ENCODE measurements at regions of chr1 and their contacts with region 1.

Region 1: DNA sequence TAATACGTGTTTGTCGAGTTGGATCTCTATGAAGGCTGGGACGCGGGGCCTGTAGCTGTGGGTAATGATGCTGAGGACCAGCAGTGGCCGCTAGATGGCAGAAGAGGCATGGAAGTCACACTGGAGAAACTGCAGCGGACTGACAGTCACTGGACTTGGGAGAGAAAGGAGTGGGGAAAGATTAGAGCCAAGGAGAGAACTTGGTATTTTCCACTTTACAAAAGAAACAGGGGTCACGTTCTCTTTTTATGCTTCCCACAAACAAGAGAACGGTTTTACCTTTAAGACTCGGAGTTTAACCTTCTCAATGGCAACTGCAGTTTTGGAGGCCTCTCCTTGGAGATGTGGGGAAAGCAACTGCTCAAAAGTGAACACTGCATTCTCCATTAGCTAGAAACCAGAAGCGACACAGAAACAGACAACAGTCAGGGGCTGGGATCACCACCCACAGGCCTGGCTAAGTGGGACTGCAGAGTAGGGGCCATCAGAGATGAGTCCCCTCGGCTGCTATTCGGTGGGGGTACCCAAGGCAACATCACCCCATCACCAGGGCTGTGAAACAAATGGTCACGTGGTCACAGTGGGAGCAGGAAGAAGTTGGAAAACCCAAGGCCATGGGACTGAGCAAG is 51.1 kb upstream of the EDEM3 start:
- DNase-seq: peak; percentile 78 to 88 (median 81)
- H3K4me3 ChIP-seq: peak overlapping the region in 1 of 3 experiments; percentile 5
- H3K4me3 Mint-ChIP-seq: no peak overlapping the region
- H3K27ac ChIP-seq: peak overlapping the region; percentile 11 to 19
- H3K27ac Mint-ChIP-seq: peak overlapping the region; percentile 71 to 88 (median 80)
- H3K4me1 ChIP-seq: peaks cover 19% of the 10 kb centered on the region in 2 donors
- H3K4me1 Mint-ChIP-seq: peaks cover 19% of the 10 kb centered on the region
- H3K27me3 ChIP-seq: no peaks in the 10 kb centered on the region
- H3K27me3 Mint-ChIP-seq: no peaks in the 10 kb centered on the region
- CTCF ChIP-seq: peak; percentile 93

Region 2: GRCh38 chr1:184982002-184982954 is 176.5 kb after region 1 on chr1:
- intact Hi-C with region 1: loop called (anchors 1 to 2 kb)
- DNase-seq: peak; percentile 73 to 85 (median 81)
- H3K4me3 ChIP-seq: no peak overlapping the region
- H3K4me3 Mint-ChIP-seq: no peak overlapping the region
- H3K27ac ChIP-seq: no peak overlapping the region
- H3K27ac Mint-ChIP-seq: no peak overlapping the region
- H3K4me1 ChIP-seq: peaks cover 4% of the 10 kb centered on the region in 2 donors
- H3K4me1 Mint-ChIP-seq: peaks cover 4% of the 10 kb centered on the region
- H3K27me3 ChIP-seq: no peaks in the 10 kb centered on the region
- H3K27me3 Mint-ChIP-seq: peaks cover 0 to 10% (median 4%) of the 10 kb centered on the region in 3 donors
- CTCF ChIP-seq: peak; percentile 85